ENCODE measurements at regions of chr10 and their contacts with region 1.

Region 1: GRCh38 chr10:66925896-66926715 is at the start of gene LRRTM3:
- DNase-seq: peak in 1 of 2 experiments; percentile 41
- H3K4me3 ChIP-seq: no peak within 1 kb of the TSS
- H3K27ac ChIP-seq: no peak within 1 kb of the TSS
- H3K4me1 ChIP-seq: no peaks in the 10 kb centered on the region
- H3K27me3 ChIP-seq: no peaks in the 10 kb centered on the region; the same call in 1 of the 2 replicates
- CTCF ChIP-seq: peak; percentile 60
- total RNA-seq, gene LRRTM3: not detected in 2 replicates

Region 2: GRCh38 chr10:66180581-66181318 is 745.4 kb before region 1 on chr10:
- CTCF ChIA-PET with region 1: no interaction called
- POLR2A ChIA-PET with region 1: interaction called, 4 read pairs
- intact Hi-C with region 1: loop called (anchors 5 kb)
- DNase-seq: peak; percentile 5 to 49
- H3K4me3 ChIP-seq: no peak overlapping the region
- H3K27ac ChIP-seq: no peak overlapping the region
- H3K4me1 ChIP-seq: no peaks in the 10 kb centered on the region
- H3K27me3 ChIP-seq: no peaks in the 10 kb centered on the region
- CTCF ChIP-seq: peak; percentile 92

Region 3: GRCh38 chr10:66505003-66505657 is 421.0 kb before region 1 on chr10:
- CTCF ChIA-PET with region 1: no interaction called
- POLR2A ChIA-PET with region 1: no interaction called
- intact Hi-C with region 1: loop called (anchors 10 kb)
- DNase-seq: no peak
- H3K4me3 ChIP-seq: no peak overlapping the region
- H3K27ac ChIP-seq: no peak overlapping the region
- H3K4me1 ChIP-seq: no peaks in the 10 kb centered on the region
- H3K27me3 ChIP-seq: no peaks in the 10 kb centered on the region
- CTCF ChIP-seq: no peak

Region 4: DNA sequence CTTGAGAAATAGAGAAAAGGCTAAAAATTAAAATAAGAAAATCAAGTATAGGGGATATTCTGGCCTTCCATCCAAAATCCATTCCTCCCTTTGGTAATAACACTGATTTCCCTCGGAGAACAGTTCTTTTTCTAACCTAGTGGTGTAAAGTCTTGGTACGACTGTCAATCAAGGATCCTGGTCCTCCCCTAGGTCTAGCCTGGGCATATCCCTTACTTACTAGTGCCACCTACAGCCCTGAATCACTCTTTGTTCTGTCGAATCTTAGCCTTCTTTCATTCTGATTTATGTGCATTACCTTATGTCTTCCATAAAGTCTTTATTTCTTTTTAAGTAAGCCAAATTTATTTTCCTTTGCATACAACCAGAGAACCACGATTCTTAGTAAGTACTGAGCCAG is 298.9 kb before region 1 on chr10:
- CTCF ChIA-PET with region 1: no interaction called
- POLR2A ChIA-PET with region 1: no interaction called
- intact Hi-C with region 1: loop called (anchors 10 kb)
- DNase-seq: no peak
- H3K4me3 ChIP-seq: no peak overlapping the region
- H3K27ac ChIP-seq: no peak overlapping the region
- H3K4me1 ChIP-seq: no peaks in the 10 kb centered on the region
- H3K27me3 ChIP-seq: no peaks in the 10 kb centered on the region
- CTCF ChIP-seq: peak; percentile 42; the same call in 1 of the 2 replicates

Region 5: DNA sequence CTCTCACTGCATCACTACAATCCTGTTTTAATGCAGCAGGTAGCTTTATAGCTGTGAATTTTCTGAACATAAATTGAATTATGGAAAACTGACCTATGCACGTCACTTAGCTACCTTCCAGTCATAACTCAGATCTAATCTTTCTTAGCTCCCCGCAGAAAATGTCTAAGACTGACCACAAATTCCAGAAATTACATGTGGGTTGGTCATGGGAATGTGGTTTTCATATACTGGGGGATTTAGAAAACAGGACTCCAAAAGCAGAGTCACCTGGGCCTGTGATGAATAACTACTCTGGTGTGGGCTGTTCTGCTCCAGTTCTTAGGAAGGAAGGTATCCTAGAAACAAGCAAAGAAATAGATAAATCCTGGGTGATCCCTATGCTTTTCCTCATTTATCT is 178.7 kb before region 1 on chr10:
- CTCF ChIA-PET with region 1: no interaction called
- POLR2A ChIA-PET with region 1: no interaction called
- intact Hi-C with region 1: loop called (anchors 1 kb)
- DNase-seq: peak; percentile 43 to 56
- H3K4me3 ChIP-seq: no peak overlapping the region
- H3K27ac ChIP-seq: no peak overlapping the region
- H3K4me1 ChIP-seq: no peaks in the 10 kb centered on the region
- H3K27me3 ChIP-seq: no peaks in the 10 kb centered on the region
- CTCF ChIP-seq: no peak

Region 6: GRCh38 chr10:66836057-66836456 is 90.0 kb before region 1 on chr10:
- CTCF ChIA-PET with region 1: no interaction called
- POLR2A ChIA-PET with region 1: interaction called, 3 read pairs
- intact Hi-C with region 1: loop called (anchors 10 kb)
- DNase-seq: peak; percentile 32 to 70
- H3K4me3 ChIP-seq: no peak overlapping the region
- H3K27ac ChIP-seq: no peak overlapping the region
- H3K4me1 ChIP-seq: no peaks in the 10 kb centered on the region
- H3K27me3 ChIP-seq: no peaks in the 10 kb centered on the region
- CTCF ChIP-seq: no peak

Region 7: DNA sequence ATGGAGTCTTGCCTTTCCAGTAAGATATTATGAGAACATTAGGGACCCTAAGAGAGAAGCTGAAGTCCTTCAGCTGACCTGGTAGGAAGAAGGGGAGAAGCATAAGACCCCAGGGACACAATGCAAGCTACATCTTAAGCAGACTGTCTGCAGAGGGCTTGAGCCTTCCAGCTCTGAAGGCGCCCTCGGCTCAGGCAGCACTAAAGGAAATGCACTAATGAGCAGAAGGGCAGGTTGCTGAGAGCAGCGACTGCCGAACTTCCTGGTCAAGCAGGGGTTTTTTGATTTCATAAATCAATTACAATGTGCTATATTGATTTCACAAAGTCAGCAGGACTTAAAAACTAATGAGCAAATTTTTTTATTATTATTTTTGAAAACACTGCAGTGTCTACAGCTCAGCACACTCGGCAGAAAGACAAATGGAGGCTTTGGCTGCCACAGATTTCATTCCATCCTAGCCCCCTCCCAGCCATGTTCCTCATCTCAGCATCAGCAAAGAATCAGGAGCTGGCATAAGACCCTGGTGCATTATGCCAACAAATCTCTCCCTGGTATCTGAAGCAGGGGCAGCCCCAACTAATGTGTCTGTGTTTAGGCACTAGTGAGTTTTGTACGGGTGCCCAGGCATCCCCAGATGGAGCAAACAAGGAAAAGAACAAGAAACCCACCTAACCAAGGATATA is 56.8 kb after region 1 on chr10:
- CTCF ChIA-PET with region 1: no interaction called
- POLR2A ChIA-PET with region 1: no interaction called
- intact Hi-C with region 1: no loop called
- DNase-seq: no peak
- H3K4me3 ChIP-seq: no peak overlapping the region
- H3K27ac ChIP-seq: no peak overlapping the region
- H3K4me1 ChIP-seq: no peaks in the 10 kb centered on the region
- H3K27me3 ChIP-seq: no peaks in the 10 kb centered on the region
- CTCF ChIP-seq: no peak

Region 8: DNA sequence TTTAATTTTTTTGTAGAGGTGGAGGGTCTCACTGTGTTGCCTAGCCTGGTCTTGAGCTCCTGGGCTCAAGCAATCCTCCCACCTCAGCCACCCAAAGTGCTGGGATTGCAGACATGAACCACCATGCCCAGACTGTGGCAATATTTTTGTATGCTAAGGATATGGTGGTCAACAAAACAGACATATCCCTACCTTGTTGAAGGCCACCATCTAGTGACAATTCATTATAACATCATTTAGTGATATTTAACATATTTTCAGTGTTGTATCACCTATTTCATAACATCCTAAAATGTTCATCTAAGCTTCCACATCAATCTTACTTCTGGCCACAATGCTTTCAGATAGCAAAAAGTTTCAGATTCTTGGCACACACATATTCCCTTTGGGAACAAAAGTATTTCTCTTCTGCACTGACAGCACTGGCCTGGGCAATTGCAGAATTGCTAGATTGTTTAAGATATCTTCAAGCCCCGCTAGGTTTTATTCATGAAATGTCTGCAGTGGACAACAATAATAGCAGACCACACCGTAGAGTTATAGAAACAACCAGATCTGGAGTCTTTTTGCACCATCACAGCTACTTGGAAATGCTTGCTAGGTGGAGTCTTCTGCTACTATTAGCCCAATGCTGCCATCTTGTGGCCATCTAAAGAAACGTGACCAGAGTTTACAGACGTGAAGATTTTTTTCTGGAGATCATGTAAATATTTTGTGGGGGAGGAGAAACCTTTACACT is 853.5 kb after region 1 on chr10:
- CTCF ChIA-PET with region 1: interaction called, 17 read pairs
- POLR2A ChIA-PET with region 1: no interaction called
- intact Hi-C with region 1: loop called (anchors 2 kb)
- DNase-seq: peak; percentile 55 to 65
- H3K4me3 ChIP-seq: no peak overlapping the region
- H3K27ac ChIP-seq: no peak overlapping the region
- H3K4me1 ChIP-seq: no peaks in the 10 kb centered on the region
- H3K27me3 ChIP-seq: no peaks in the 10 kb centered on the region
- CTCF ChIP-seq: peak; percentile 92

Measured in PC-9 (cell line).